ENCODE measurements at regions of chr7 and their contacts with region 1.

Region 1: DNA sequence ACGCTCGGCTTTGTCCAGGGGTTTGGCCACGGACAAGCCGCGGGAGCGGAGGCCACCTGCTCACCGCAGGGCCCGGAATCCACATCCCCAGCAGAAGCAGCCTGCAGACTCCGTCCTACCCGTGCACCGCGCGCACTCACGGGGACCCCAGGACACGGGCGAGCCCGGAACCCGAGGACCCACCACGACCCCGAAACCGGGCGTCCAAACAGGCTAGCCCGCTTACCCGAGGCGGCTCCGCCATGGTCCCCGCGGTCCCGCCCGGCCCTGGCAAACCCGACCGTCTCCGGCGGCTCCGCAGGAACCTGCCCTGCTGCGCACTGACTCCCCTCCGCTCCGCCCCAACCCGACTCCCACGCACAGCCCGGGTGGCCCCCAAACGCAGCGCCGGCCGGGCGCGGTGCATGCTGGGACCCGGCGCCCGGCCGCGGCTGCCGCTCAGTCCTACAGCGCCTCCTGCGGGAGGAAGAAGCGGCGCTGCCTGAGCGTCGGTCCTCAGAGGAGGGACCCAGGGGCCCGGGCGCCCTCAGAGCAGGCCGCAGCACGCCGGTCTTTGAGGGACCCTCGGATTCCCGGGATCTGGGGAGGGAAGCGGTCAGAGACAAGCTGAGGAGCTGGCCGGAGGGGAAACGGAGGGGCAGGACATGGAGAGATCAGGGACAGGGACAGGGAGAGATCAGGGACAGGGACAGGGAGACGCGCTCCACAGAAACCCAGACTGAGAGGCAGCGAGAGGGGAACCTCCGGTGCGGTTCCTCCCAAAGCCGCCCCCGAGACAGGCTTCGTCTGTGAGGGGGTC is at the start of gene ZNF786:
- DNase-seq: peak; percentile 93
- ATAC-seq: peak; percentile 97
- total RNA-seq, gene ZNF786: 2.7 TPM

Region 2: DNA sequence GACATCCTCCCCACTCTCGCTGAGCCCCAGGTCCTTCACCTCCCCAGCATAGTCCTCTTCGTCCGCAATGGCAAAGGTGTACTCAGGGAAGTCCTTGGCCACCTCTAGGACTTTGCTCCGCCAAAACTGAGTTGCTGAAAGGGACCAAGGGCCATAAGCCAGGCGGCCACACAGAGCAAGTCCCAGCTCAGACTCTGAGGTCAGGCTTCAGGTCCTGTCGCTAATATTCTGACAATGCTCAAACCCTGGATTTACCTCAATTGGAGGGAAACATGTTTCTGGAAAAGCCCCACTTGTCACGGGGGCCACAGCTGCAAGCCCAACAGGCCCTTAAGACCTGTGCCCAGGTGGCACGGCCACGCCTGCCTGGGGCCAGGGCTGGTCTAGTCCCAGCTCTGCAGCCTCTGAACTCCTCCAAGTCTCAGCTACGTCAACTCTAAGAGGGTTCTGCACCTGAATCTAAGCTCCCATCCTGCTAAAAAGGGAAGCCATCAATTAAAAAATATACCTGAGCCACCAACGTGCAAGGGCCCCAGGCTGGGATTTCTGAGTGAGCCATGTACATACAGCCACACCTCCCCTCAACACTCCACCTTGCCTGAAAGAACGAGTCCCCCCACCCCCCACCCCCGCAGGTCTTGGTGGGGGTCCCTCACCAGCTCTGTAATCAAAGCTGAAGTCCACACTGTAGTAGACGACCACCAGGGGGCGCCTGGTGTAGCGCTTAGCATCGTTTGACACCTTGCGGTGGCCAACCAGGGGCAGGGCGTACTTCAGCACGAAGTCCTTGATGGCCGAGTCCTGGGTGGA is 85.2 kb before region 1 on chr7:
- intact Hi-C with region 1: loop called (anchors 5 kb)
- DNase-seq: peak; percentile 93
- ATAC-seq: peak; percentile 88